ENCODE measurements at regions of chr4 and their contacts with region 1.

Region 1: GRCh38 chr4:173318648-173319211 is 15.4 kb downstream of the HMGB2 start:
- DNase-seq: peak in 1 of 35 experiments; percentile 61
- ATAC-seq: peak in 1 of 4 experiments; percentile 48
- H3K4me3 ChIP-seq: no peak overlapping the region
- H3K4me3 Mint-ChIP-seq: no peak overlapping the region
- H3K27ac ChIP-seq: no peak overlapping the region
- H3K27ac Mint-ChIP-seq: no peak overlapping the region
- H3K4me1 ChIP-seq: no peaks in the 10 kb centered on the region
- H3K4me1 Mint-ChIP-seq: no peaks in the 10 kb centered on the region
- H3K27me3 ChIP-seq: no peaks in the 10 kb centered on the region
- H3K27me3 Mint-ChIP-seq: no peaks in the 10 kb centered on the region

Region 2: GRCh38 chr4:173013232-173013930 is 305.3 kb before region 1 on chr4:
- CTCF ChIA-PET with region 1: interaction called, 13 read pairs
- POLR2A ChIA-PET with region 1: no interaction called
- DNase-seq: peak in 31 of 35 experiments; percentile 7 to 69 (median 33)
- ATAC-seq: peak in 2 of 4 experiments; percentile 53 to 68
- H3K4me3 ChIP-seq: no peak overlapping the region
- H3K4me3 Mint-ChIP-seq: no peak overlapping the region
- H3K27ac ChIP-seq: no peak overlapping the region
- H3K27ac Mint-ChIP-seq: no peak overlapping the region
- H3K4me1 ChIP-seq: no peaks in the 10 kb centered on the region
- H3K4me1 Mint-ChIP-seq: no peaks in the 10 kb centered on the region
- H3K27me3 ChIP-seq: peaks cover 0 to 2% of the 10 kb centered on the region in 2 experiments
- H3K27me3 Mint-ChIP-seq: no peaks in the 10 kb centered on the region

Region 3: DNA sequence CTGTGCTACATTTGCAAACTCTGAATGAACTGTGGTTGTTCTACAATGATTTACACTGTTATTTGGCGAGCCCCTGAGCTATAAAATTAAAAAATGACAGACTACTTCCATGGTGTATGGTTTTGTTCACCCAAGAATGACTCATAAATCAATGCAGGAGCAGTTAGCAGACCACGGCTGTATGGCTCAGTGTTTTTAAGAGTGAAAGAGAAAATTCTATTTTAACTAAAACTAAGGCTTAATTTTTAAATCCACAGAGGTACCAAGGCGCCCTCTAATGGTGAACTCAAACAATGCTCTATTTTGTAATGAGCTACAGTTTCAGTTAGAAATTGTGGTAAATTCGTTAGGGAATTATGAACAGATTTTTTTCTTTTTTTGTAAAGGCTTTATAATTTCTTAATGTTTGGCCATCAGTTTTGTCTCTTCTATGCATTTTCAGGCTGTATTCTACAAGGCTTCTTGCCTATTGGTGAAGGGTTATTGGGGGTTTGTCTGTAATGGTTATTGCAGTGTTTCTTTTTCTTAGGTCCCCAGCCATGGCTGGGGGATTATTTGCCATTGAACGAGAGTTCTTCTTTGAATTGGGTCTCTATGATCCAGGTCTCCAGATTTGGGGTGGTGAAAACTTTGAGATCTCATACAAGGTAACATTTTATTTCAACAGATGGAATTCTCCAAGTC is 17.1 kb before region 1 on chr4:
- CTCF ChIA-PET with region 1: interaction called, 9 to 16 read pairs
- POLR2A ChIA-PET with region 1: no interaction called
- DNase-seq: peak in 5 of 35 experiments; percentile 4 to 55 (median 9)
- ATAC-seq: no peak
- H3K4me3 ChIP-seq: no peak overlapping the region
- H3K4me3 Mint-ChIP-seq: no peak overlapping the region
- H3K27ac ChIP-seq: no peak overlapping the region
- H3K27ac Mint-ChIP-seq: peak overlapping the region in 1 of 2 donors; percentile 22
- H3K4me1 ChIP-seq: no peaks in the 10 kb centered on the region
- H3K4me1 Mint-ChIP-seq: peaks cover 8 to 13% (median 9%) of the 10 kb centered on the region in 3 donors
- H3K27me3 ChIP-seq: no peaks in the 10 kb centered on the region
- H3K27me3 Mint-ChIP-seq: no peaks in the 10 kb centered on the region

Region 4: DNA sequence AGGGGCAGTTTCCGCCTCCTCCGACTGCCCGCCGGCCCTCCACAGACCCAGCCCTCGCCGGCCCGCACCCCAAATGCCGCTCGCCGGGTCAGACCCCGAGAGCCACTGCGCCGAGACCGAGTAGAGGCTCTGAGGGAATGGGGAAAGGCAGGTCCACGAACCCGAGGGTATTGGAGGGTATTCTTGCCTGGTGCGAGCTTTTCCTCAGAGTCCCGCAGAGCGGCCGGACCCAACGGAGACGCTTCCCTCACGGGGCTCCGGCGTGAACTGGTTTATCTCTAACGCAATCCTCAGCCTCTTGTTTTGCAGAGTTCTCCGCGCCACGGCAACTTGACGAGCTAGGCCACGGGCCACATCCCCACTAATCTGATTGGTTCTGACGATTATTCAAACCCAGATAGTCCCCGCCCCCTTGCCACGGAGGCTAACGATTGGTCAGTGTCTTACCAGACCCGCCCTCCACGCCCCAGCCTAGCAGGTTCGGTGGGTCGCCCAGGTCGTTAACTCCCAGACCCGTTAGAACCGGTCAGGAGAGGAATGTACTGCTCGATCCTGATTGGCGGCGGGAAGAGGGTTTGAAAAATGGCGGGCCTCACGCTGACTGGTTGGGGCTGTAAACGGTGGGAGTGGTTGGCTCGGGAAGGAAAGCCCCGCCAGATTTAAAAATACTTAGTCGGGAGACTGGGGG is 15.5 kb after region 1 on chr4 and contains the start of gene HMGB2:
- CTCF ChIA-PET with region 1: interaction called, 6 to 37 read pairs
- POLR2A ChIA-PET with region 1: interaction called, 3 to 8 read pairs
- DNase-seq: peak; percentile 97 to 100 (median 99)
- ATAC-seq: peak; percentile 89 to 94 (median 92)
- H3K4me3 ChIP-seq: peak within 1 kb of the TSS; percentile 72 to 100
- H3K4me3 Mint-ChIP-seq: peak within 1 kb of the TSS; percentile 93 to 97 (median 96)
- H3K27ac ChIP-seq: peak within 1 kb of the TSS; percentile 91
- H3K27ac Mint-ChIP-seq: peak within 1 kb of the TSS; percentile 97 to 98
- H3K4me1 ChIP-seq: peaks cover 13 to 16% of the 10 kb centered on the region in 2 experiments
- H3K4me1 Mint-ChIP-seq: peaks cover 26 to 29% (median 27%) of the 10 kb centered on the region in 3 donors
- H3K27me3 ChIP-seq: no peaks in the 10 kb centered on the region
- H3K27me3 Mint-ChIP-seq: peaks cover 4 to 11% of the 10 kb centered on the region in 2 donors
- total RNA-seq, gene HMGB2: 87.6 to 151 (median 103) TPM

Region 5: DNA sequence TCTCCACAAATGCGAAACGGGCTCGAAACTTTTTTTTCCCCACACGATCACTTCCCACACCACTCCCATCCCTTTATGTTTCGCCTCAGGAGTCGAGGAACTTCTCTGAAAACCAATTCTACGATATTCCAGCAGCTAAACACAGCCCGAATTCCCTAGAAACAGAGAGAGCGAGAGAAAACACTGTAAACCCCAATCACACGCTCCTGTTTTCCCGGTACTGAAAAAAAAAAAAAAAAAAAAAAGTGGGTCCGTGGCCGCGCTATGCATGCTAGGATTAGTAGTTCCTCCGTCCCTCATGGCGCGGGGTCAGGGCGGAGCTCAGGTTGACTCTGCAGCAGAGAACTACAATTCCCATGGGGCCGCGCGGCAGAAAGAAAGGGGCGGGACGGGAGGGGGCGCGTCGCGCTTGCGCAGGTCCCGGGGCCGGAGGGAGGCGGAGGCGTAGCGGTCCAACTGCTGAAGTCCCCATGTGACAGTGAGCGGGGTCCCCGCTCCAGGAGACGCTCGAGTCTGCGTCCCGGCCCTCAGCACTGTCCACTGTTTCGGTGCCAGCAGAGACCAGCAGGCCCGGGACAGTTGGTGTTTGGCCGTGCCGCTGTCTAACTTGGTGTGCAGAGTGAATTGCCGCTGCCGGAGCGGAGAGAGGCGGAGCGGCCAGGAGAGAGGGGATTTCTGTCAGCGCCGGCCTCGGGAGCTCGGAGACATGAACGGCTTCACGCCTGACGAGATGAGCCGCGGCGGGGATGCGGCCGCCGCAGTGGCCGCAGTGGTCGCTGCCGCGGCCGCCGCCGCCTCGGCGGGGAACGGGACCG is 52.0 kb after region 1 on chr4 and contains the start of gene SAP30:
- CTCF ChIA-PET with region 1: interaction called in 1 of 2 experiments, 10 read pairs
- POLR2A ChIA-PET with region 1: no interaction called
- DNase-seq: peak; percentile 89 to 99 (median 96)
- ATAC-seq: peak; percentile 83 to 89 (median 88)
- H3K4me3 ChIP-seq: peak within 1 kb of the TSS; percentile 95 to 98
- H3K4me3 Mint-ChIP-seq: peak within 1 kb of the TSS; percentile 90 to 100 (median 99)
- H3K27ac ChIP-seq: peak within 1 kb of the TSS; percentile 60
- H3K27ac Mint-ChIP-seq: peak within 1 kb of the TSS; percentile 95
- H3K4me1 ChIP-seq: peaks cover 14 to 21% of the 10 kb centered on the region in 2 experiments
- H3K4me1 Mint-ChIP-seq: peaks cover 26 to 39% (median 31%) of the 10 kb centered on the region in 3 donors
- H3K27me3 ChIP-seq: peaks cover 0 to 17% of the 10 kb centered on the region in 2 experiments
- H3K27me3 Mint-ChIP-seq: peaks cover 5 to 7% of the 10 kb centered on the region in 2 donors
- total RNA-seq, gene SAP30: 2.8 to 5.8 (median 4.1) TPM

Region 6: DNA sequence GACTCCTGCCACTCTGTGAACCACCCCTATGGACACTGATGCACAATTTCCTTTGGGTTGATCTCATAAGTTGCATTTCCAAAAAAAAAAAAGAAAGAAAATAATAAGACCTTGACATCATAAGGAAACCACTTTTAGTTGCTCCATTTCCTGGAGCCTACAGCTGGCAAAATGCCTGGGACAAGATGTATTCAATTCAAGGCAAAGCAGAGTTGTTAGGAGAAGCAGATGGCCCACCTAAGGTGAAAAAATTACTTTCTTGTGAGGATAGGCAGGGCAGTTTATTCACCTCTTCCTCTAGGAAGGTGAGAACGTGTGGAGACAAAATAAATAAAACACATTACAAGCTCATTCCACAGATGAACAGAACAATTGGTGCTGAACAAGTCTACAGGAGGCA is 94.3 kb after region 1 on chr4:
- CTCF ChIA-PET with region 1: interaction called, 35 to 44 read pairs
- POLR2A ChIA-PET with region 1: no interaction called
- DNase-seq: no peak
- ATAC-seq: no peak
- H3K4me3 ChIP-seq: no peak overlapping the region
- H3K4me3 Mint-ChIP-seq: no peak overlapping the region
- H3K27ac ChIP-seq: no peak overlapping the region
- H3K27ac Mint-ChIP-seq: no peak overlapping the region
- H3K4me1 ChIP-seq: no peaks in the 10 kb centered on the region
- H3K4me1 Mint-ChIP-seq: no peaks in the 10 kb centered on the region
- H3K27me3 ChIP-seq: no peaks in the 10 kb centered on the region
- H3K27me3 Mint-ChIP-seq: no peaks in the 10 kb centered on the region

Region 7: GRCh38 chr4:173420324-173420752 is 101.6 kb after region 1 on chr4:
- CTCF ChIA-PET with region 1: interaction called, 35 to 44 read pairs
- POLR2A ChIA-PET with region 1: no interaction called
- DNase-seq: peak in 1 of 35 experiments; percentile 43
- ATAC-seq: peak in 3 of 4 experiments; percentile 34 to 47 (median 44)
- H3K4me3 ChIP-seq: no peak overlapping the region
- H3K4me3 Mint-ChIP-seq: no peak overlapping the region
- H3K27ac ChIP-seq: no peak overlapping the region
- H3K27ac Mint-ChIP-seq: no peak overlapping the region
- H3K4me1 ChIP-seq: peaks cover 2 to 6% of the 10 kb centered on the region in 2 experiments
- H3K4me1 Mint-ChIP-seq: peaks cover 7 to 13% (median 9%) of the 10 kb centered on the region in 3 donors
- H3K27me3 ChIP-seq: no peaks in the 10 kb centered on the region
- H3K27me3 Mint-ChIP-seq: no peaks in the 10 kb centered on the region

Measured in T-cell (primary cell).